Heart right ventricle (tissue), 16 donors: ENCODE measurements at regions of chr9 and their contacts with region 1.

Region 1: DNA sequence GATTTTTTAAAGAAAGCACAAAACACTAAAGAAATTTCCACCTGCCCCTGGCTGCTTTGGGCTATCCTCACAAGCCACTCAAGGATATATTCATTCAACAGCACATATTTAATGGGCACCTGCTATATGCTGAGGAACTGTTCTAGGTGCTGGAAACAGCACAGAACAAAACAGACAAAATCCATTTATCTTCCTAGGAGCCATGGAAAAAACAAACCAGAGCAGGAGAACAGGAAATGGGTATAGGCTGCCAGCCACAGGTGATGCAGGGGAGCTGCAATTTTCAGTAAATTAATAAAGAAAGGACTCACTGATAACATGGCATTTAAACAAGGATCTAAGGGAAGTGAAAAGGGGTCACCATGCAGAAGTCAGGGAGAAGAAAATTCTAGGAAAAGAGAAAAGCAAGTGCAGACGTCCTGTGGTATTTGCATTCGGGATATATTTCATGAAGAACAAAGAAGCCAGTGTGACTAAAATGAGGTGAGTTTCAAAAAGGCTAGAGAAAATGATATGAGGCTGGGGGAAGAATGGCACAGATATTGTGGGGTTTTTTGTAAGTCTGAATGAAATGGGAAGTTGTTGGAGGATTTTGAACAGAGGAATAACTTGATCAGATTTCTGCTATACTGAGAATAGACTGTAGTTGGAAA is 152.2 kb downstream of the ADAMTSL1 start:
- DNase-seq: no peak
- ATAC-seq: no peak
- H3K4me3 ChIP-seq: no peak overlapping the region
- H3K27ac ChIP-seq: no peak overlapping the region
- H3K4me1 ChIP-seq: peaks cover 0 to 22% (median 0%) of the 10 kb centered on the region in 9 donors
- H3K27me3 ChIP-seq: no peaks in the 10 kb centered on the region
- CTCF ChIP-seq: peak in 1 of 9 donors; percentile 50

Region 2: GRCh38 chr9:18173923-18174322 is 452.2 kb before region 1 on chr9:
- intact Hi-C with region 1: no loop called
- DNase-seq: no peak
- ATAC-seq: no peak
- H3K4me3 ChIP-seq: no peak overlapping the region
- H3K27ac ChIP-seq: no peak overlapping the region
- H3K4me1 ChIP-seq: no peaks in the 10 kb centered on the region
- H3K27me3 ChIP-seq: peaks cover 0 to 5% (median 0%) of the 10 kb centered on the region in 7 donors
- CTCF ChIP-seq: no peak

Region 3: DNA sequence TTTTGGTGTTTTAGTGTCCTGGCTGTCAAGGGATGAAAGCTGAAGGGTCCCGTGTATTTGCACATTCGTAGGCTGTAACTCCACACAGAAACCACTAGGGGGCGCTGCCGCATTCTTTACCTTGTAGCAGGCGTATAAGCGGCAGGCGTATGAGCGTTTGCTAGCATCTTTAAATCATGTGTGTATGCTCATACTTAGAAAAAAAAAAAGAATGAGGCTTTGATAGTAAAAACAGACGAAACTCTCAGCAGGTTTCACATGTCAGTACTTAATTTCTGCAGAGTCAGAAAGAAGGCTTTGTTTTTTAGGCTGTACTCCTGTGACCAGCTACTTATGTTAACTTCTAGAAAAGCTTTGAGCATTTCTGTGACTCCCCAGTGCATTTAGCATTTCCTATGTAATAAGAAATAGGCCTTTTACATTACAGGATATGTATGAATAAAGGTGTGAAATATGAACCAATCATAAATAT is 371.0 kb before region 1 on chr9:
- intact Hi-C with region 1: loop called in 1 of 10 experiments (anchors 10 kb)
- DNase-seq: peak; percentile 70 to 83
- ATAC-seq: peak; percentile 47 to 91 (median 84)
- H3K4me3 ChIP-seq: no peak overlapping the region
- H3K27ac ChIP-seq: no peak overlapping the region
- H3K4me1 ChIP-seq: peaks cover 0 to 21% (median 4%) of the 10 kb centered on the region in 9 donors
- H3K27me3 ChIP-seq: no peaks in the 10 kb centered on the region
- CTCF ChIP-seq: peak; percentile 88 to 98 (median 97)

Region 4: DNA sequence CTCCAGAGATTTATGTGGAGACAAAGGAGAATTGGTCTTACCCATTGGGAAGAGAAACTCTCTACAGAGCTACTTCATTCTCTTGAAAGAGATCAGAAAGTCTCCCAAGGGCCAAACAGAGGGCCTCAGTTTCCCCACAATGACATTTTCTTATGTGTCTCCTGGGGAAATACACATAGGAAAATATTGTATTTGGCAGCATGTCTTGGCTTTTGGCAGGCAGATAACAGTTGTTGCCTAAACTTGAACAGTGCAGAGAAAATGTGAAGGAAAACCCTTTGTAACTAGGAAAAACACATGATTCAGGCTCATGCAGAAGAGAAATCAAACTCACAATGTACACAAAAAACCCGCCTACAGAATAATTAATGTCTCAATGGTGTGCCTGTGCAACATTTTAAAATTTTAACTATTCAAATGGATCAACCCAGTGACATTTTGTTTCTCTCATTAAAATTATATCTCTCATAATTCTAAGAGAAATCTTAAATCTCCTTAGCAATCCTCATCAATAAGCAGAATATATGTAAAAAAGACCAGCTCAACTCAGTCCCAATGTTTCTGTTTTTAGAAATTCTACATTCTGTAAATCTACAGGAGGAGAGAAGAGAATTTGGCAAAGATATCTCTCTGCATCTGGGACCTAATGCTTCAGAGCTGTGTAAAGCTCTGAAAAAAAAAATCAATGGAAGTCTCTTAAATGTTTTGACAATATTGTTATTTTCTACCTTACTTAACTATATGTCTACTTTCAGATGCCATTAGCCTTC is 52.8 kb after region 1 on chr9:
- intact Hi-C with region 1: no loop called
- DNase-seq: peak in 1 of 2 donors; percentile 9
- ATAC-seq: peak in 2 of 8 donors; percentile 42 to 47
- H3K4me3 ChIP-seq: no peak overlapping the region
- H3K27ac ChIP-seq: no peak overlapping the region
- H3K4me1 ChIP-seq: peaks cover 0 to 42% (median 12%) of the 10 kb centered on the region in 9 donors
- H3K27me3 ChIP-seq: no peaks in the 10 kb centered on the region
- CTCF ChIP-seq: no peak

Region 5: GRCh38 chr9:18786911-18787650 is 160.9 kb after region 1 on chr9:
- intact Hi-C with region 1: loop called in 1 of 10 experiments (anchors 5 kb)
- DNase-seq: no peak
- ATAC-seq: peak in 6 of 8 donors; percentile 16 to 59 (median 46)
- H3K4me3 ChIP-seq: no peak overlapping the region
- H3K27ac ChIP-seq: peak overlapping the region in 9 of 10 donors; percentile 30 to 91 (median 78)
- H3K4me1 ChIP-seq: peaks cover 3 to 58% (median 34%) of the 10 kb centered on the region in 9 donors
- H3K27me3 ChIP-seq: no peaks in the 10 kb centered on the region
- CTCF ChIP-seq: no peak

Region 6: DNA sequence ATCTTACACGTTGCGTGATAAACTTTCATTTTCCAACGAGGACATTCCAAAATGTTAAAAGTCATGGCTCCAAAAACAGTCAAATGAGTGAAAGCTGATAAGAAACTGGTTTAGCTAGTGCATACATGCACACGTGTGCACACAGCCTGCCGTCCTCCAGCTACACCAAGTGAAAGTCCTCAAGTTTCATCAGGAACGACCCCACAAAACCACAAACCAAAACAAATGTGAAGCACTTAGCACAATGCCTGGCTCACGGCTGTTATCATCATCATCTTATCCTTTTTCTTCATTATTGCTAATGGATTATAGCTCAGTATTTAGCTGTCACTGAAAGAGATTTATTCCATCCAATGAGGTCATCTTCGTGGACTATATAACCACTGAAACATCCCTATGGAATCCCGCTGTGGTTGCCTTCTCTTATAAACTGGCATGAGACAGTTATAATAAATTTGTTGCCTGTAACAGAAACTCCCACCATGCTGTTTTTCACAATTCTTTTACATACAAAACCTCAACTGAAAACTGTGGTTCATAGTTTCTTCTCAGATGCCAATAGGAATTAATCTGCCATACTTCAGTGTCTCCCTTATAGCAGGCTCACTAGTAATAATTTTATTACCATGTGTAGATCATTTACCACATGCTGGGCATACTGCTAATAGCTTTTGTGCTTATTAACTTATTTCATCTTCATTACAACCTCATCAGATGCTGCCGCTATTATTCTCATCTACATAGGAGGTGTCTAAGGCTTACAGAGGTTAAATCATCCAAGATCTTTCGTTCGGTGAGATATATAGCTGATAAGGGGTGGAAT is 350.7 kb after region 1 on chr9:
- intact Hi-C with region 1: no loop called
- DNase-seq: no peak
- ATAC-seq: no peak
- H3K4me3 ChIP-seq: peak overlapping the region in 3 of 10 donors; percentile 15 to 24 (median 21)
- H3K27ac ChIP-seq: no peak overlapping the region
- H3K4me1 ChIP-seq: peaks cover 0 to 39% (median 6%) of the 10 kb centered on the region in 9 donors
- H3K27me3 ChIP-seq: no peaks in the 10 kb centered on the region
- CTCF ChIP-seq: no peak

Region 7: GRCh38 chr9:19493174-19493811 is 867.1 kb after region 1 on chr9:
- intact Hi-C with region 1: no loop called
- DNase-seq: peak; percentile 73 to 79
- ATAC-seq: peak; percentile 79 to 94 (median 82)
- H3K4me3 ChIP-seq: peak overlapping the region in 7 of 10 donors; percentile 13 to 45 (median 33)
- H3K27ac ChIP-seq: peak overlapping the region in 8 of 10 donors; percentile 18 to 72 (median 57)
- H3K4me1 ChIP-seq: peaks cover 0 to 20% (median 11%) of the 10 kb centered on the region in 9 donors
- H3K27me3 ChIP-seq: peaks cover 0 to 9% (median 0%) of the 10 kb centered on the region in 7 donors
- CTCF ChIP-seq: peak; percentile 56 to 83 (median 73)